ENCODE measurements at regions of chr17 and their contacts with region 1.

Region 1: GRCh38 chr17:76659928-76660614 is 16.5 kb upstream of the ST6GALNAC1 start:
- DNase-seq: peak; percentile 15
- H3K27ac ChIP-seq: no peak overlapping the region
- CTCF ChIP-seq: no peak

Region 2: GRCh38 chr17:76723812-76724211 is 63.7 kb after region 1 on chr17:
- CTCF ChIA-PET with region 1: no interaction called
- POLR2A ChIA-PET with region 1: interaction called, 11 read pairs
- DNase-seq: no peak
- H3K27ac ChIP-seq: peak overlapping the region; percentile 3; the same call in 1 of the 2 replicates
- CTCF ChIP-seq: no peak

Region 3: DNA sequence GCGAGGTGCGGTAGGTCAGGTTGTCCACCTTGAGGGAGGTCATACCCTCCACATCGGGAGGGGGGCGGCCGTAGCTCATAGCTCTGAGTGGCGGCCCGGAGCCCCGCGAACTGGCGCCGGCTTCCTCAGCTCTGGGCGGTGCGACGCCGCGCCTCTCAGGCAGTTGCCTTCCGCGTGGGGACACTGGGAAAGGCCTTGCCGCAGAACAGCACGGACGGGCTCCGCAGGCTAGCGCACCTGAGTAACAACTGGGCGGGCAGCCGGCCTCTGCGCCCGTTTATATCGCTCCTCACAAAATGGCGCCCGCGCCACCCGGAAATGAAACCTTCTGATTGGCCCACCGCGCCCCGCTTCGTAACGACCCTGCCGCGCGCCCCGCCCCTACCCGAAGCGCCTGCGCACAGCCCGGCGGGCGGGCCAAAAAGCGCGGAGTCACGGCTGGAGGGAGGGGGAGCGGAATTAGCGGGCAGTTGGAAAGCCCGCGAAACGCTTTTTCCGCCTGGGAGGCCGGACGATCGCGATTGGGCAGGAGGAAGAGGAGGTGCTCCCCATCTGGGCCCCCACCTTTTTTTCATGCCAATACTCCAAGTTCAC is 77.1 kb after region 1 on chr17 and contains the start of gene SRSF2:
- CTCF ChIA-PET with region 1: no interaction called
- POLR2A ChIA-PET with region 1: no interaction called
- DNase-seq: peak; percentile 99
- H3K27ac ChIP-seq: peak within 1 kb of the TSS; percentile 96
- CTCF ChIP-seq: no peak